ENCODE measurements at regions of chr11 and their contacts with region 1.

Region 1: DNA sequence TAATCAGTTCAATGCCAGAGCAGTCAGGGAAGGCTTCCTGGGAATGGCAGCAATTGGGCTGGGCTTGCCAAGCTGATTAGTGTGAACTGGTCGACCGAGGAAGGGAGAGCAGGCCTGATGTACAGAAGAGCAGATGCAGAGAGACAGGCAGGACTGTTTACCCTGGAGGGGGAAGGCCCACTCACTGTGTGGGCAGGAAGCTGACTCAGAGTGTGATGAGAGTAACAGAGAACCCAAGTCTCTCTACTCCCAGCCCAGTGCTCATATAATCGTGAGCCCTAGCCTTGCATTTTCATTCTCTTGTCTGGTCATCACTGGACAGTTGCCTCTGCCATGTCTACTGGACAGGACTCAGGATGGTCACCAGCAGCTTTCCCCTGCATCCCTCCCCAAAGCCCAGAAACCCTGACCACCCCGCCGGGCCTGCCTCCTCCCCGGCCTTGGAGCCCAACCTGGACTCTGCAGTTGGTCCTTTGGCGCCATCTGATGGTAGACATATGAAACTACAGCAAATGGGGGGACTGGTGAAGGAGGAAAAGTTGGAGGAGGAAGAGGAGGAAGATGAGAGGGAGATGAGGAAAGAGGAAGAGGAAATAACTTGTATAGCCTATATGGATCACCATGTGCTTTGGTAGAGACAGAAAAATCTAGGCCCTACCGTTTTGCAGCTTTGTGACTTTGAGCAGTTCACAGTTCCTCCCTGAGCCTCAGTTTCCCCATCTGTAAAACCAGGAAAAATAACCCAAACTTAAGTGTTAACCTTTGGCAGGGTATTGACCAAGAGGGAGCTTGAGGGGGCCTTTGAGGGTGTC is 43.4 kb upstream of the PRDM11 start:
- DNase-seq: peak; percentile 49
- H3K4me3 ChIP-seq: no peak overlapping the region
- H3K27me3 ChIP-seq: peaks cover 6% of the 10 kb centered on the region
- CTCF ChIP-seq: peak; percentile 95

Region 2: GRCh38 chr11:44621140-44621681 is 481.8 kb before region 1 on chr11:
- CTCF ChIA-PET with region 1: interaction called, 24 read pairs
- POLR2A ChIA-PET with region 1: no interaction called
- DNase-seq: no peak
- H3K4me3 ChIP-seq: no peak overlapping the region
- H3K27me3 ChIP-seq: no peaks in the 10 kb centered on the region
- CTCF ChIP-seq: peak; percentile 98

Region 3: GRCh38 chr11:44927174-44927661 is 175.8 kb before region 1 on chr11:
- CTCF ChIA-PET with region 1: interaction called, 1,245 read pairs
- POLR2A ChIA-PET with region 1: interaction called, 10 read pairs
- DNase-seq: no peak
- H3K4me3 ChIP-seq: no peak overlapping the region
- H3K27me3 ChIP-seq: no peaks in the 10 kb centered on the region; the same call in 1 of the 2 replicates
- CTCF ChIP-seq: peak; percentile 92

Region 4: GRCh38 chr11:44950625-44951476 is 152.2 kb before region 1 on chr11 and contains the start of gene TP53I11:
- CTCF ChIA-PET with region 1: interaction called, 1,245 read pairs
- POLR2A ChIA-PET with region 1: no interaction called
- DNase-seq: peak; percentile 18
- H3K4me3 ChIP-seq: peak within 1 kb of the TSS; percentile 92
- H3K27me3 ChIP-seq: no peaks in the 10 kb centered on the region
- CTCF ChIP-seq: peak; percentile 37
- polyA plus RNA-seq, gene TP53I11: 22.2 and 29.6 TPM in 2 replicates

Region 5: GRCh38 chr11:45089676-45090499 is 13.1 kb before region 1 on chr11:
- CTCF ChIA-PET with region 1: interaction called, 64 read pairs
- POLR2A ChIA-PET with region 1: interaction called, 3 read pairs
- DNase-seq: no peak
- H3K4me3 ChIP-seq: no peak overlapping the region
- H3K27me3 ChIP-seq: no peaks in the 10 kb centered on the region
- CTCF ChIP-seq: peak; percentile 60

Region 6: GRCh38 chr11:45180179-45180842 is 77.3 kb after region 1 on chr11:
- CTCF ChIA-PET with region 1: no interaction called
- POLR2A ChIA-PET with region 1: no interaction called
- DNase-seq: no peak
- H3K4me3 ChIP-seq: peak overlapping the region; percentile 44
- H3K27me3 ChIP-seq: no peaks in the 10 kb centered on the region
- CTCF ChIP-seq: peak; percentile 56

Measured in BJ (cell line).